Caco-2 (cell line): ENCODE measurements at regions of chr7 and their contacts with region 1.

Region 1: DNA sequence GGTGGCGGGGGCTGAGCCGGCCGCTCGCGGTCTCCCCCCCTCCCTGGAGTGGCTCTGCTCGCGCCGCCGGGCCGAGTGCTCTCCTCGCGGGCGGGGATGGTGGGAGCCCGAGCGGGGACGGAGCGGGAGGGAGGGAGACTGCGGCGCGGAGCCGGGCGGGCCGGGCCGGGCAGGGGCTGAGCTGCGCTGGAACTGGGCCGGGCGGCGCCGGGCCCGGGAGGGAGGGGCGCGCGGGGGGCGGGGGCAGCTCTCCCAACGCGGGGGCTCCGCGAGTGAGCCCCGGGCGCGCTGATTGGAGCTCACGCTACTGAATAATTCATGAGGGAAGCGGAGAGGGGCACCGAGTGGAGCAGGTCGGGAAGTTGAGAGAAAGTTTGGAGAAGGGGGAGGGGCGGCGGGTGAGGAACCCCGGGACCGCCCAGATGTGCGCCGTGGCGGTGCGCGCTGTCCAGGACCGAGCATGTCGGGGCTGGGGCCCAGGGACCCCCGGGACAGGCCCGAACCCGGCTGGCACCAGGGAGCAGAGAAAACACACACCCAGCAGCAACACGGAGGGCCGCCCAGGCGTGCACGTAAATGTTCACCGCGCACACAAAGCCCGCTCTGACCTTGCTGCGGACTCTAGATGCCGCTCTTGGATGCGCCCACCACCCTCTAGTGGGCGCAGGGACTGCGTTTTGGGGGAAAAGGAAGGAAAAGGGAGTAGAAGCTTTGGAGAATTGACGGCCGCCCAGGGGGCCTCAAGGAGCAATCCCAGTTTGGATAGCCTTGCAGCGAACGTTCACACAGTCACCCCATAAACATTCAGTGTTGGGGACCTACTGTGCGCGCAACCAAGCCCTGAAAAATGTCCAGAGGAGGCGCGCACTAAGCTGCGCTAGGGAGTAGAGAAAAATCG is at the start of gene EPHB4:
- DNase-seq: peak; percentile 93 to 95
- H3K4me3 ChIP-seq: peak within 1 kb of the TSS; percentile 71
- H3K4me3 Mint-ChIP-seq: peak within 1 kb of the TSS; percentile 89
- H3K27ac Mint-ChIP-seq: peak within 1 kb of the TSS; percentile 88
- H3K4me1 ChIP-seq: peaks cover 29% of the 10 kb centered on the region
- H3K4me1 Mint-ChIP-seq: peaks cover 27% of the 10 kb centered on the region
- H3K27me3 ChIP-seq: no peaks in the 10 kb centered on the region
- H3K27me3 Mint-ChIP-seq: no peaks in the 10 kb centered on the region
- CTCF ChIP-seq: peak; percentile 44 to 92
- total RNA-seq, gene EPHB4: 112 and 117 TPM in 2 replicates

Region 2: DNA sequence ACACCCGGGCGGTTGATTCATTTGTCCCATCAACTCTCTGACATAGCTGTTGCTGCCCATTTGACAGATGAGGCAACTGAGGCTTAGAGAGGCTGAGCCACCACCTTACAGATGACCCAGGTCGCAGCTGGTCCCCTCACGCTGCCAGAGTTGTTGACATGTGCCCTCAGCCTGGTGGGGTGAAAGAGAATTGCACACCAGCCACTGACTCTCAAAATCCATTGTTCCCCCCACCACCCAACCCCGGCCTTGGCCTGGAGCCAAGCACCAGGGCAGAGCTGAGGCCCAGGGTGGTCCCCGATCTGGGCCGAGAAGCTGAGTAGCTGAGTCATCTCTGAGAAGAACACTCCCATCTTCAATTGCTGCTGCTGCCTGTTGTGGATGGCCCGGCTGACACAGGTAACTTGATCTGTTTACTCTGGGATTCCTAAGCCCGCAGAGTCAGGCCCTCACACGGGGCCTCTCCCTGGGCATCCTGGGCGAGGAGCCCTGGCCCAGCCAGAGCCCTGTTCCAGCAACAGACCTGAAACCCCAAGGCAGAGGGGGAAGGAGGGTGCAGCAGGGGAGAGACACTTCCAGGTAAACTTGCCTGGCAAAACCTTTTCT is 580.3 kb before region 1 on chr7:
- CTCF ChIA-PET with region 1: no interaction called
- POLR2A ChIA-PET with region 1: no interaction called
- intact Hi-C with region 1: no loop called
- DNase-seq: peak; percentile 83 to 90
- H3K4me3 ChIP-seq: no peak overlapping the region
- H3K4me3 Mint-ChIP-seq: peak overlapping the region; percentile 59
- H3K27ac Mint-ChIP-seq: peak overlapping the region; percentile 97
- H3K4me1 ChIP-seq: peaks cover 16% of the 10 kb centered on the region
- H3K4me1 Mint-ChIP-seq: peaks cover 19% of the 10 kb centered on the region
- H3K27me3 ChIP-seq: no peaks in the 10 kb centered on the region
- H3K27me3 Mint-ChIP-seq: no peaks in the 10 kb centered on the region
- CTCF ChIP-seq: peak; percentile 10 to 31

Region 3: GRCh38 chr7:100874577-100875355 is 47.2 kb after region 1 on chr7 and contains the start of gene SRRT:
- CTCF ChIA-PET with region 1: interaction called, 14 read pairs
- POLR2A ChIA-PET with region 1: interaction called, 16 read pairs
- intact Hi-C with region 1: no loop called
- DNase-seq: peak; percentile 98 to 99
- H3K4me3 ChIP-seq: peak within 1 kb of the TSS; percentile 81
- H3K4me3 Mint-ChIP-seq: peak within 1 kb of the TSS; percentile 85
- H3K27ac Mint-ChIP-seq: peak within 1 kb of the TSS; percentile 98
- H3K4me1 ChIP-seq: peaks cover 10% of the 10 kb centered on the region; the same call in 1 of the 2 replicates
- H3K4me1 Mint-ChIP-seq: peaks cover 14% of the 10 kb centered on the region
- H3K27me3 ChIP-seq: no peaks in the 10 kb centered on the region
- H3K27me3 Mint-ChIP-seq: no peaks in the 10 kb centered on the region
- CTCF ChIP-seq: peak; percentile 33 to 48
- total RNA-seq, gene SRRT: 211 and 243 TPM in 2 replicates

Region 4: DNA sequence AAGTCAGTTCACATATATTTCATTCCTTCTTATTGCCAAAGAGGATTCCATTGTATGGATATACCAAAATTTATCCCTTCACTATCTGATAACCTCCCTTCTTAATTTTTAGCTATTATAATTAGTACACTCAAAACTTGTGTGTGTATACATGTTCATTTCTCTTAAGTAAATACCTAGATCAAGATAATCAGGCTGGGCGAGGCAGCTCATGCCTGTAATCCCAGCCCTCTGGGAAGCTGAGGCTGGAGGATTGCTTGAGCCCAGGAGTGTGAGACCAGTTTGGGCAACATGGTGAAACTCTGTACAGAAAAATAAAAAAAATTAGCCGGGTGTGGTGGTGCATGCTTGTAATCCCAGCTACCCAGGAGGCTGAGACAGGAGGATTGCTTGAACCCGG is 83.9 kb after region 1 on chr7:
- CTCF ChIA-PET with region 1: no interaction called
- POLR2A ChIA-PET with region 1: no interaction called
- intact Hi-C with region 1: no loop called
- DNase-seq: no peak
- H3K4me3 ChIP-seq: no peak overlapping the region
- H3K4me3 Mint-ChIP-seq: no peak overlapping the region
- H3K27ac Mint-ChIP-seq: no peak overlapping the region
- H3K4me1 ChIP-seq: peaks cover 26% of the 10 kb centered on the region
- H3K4me1 Mint-ChIP-seq: peaks cover 26% of the 10 kb centered on the region
- H3K27me3 ChIP-seq: no peaks in the 10 kb centered on the region
- H3K27me3 Mint-ChIP-seq: no peaks in the 10 kb centered on the region
- CTCF ChIP-seq: no peak